Heart right ventricle (tissue), 16 donors: ENCODE measurements at regions of chr15 and their contacts with region 1.

Region 1: DNA sequence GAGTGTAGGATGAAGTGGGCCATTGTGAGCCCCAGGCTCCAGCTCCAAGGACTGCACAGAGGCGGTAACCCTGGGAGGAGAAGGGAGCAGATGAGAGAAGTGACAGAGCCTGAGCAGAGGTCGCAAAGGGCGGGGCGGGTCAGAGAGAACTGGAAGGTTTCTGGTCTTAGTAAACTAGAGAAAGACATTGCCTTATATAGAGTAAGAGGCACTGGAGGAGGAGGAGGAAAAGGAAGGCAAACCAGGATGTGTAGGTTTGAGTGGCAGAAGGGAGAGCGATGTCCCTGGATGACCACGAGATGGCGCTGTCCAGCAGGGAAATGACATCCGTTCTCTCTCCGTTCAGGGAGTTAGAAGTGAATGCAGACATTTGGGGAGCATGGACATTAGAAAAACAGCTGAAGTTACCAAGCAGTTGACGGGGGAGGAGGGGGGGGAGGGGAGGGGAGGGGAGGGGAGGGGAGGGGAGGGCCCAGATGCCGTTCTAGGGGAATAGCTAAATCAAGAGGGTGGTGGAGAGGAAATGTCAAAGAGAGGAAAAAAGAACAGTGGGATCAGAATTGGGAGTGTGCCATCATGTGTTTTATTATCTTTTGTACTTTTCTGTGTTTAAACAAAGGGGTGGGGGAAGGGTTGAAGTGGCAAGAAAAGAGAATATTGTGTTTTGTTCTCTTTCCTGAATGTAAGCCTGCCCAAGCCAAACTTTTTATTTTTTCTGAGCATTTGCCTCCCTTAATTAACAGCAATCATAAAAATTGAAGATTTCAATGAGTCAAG is 48.8 kb downstream of the STARD5 start:
- DNase-seq: peak; percentile 76 to 84
- ATAC-seq: peak; percentile 80 to 95 (median 88)
- H3K4me3 ChIP-seq: no peak overlapping the region
- H3K27ac ChIP-seq: peak overlapping the region in 8 of 10 donors; percentile 20 to 66 (median 40)
- H3K4me1 ChIP-seq: peaks cover 0 to 18% (median 5%) of the 10 kb centered on the region in 9 donors
- H3K27me3 ChIP-seq: no peaks in the 10 kb centered on the region
- CTCF ChIP-seq: peak; percentile 70 to 85 (median 79)

Region 2: GRCh38 chr15:80789296-80789695 is 485.8 kb before region 1 on chr15:
- intact Hi-C with region 1: no loop called
- DNase-seq: no peak
- ATAC-seq: no peak
- H3K4me3 ChIP-seq: no peak overlapping the region
- H3K27ac ChIP-seq: no peak overlapping the region
- H3K4me1 ChIP-seq: peaks cover 0 to 14% (median 0%) of the 10 kb centered on the region in 9 donors
- H3K27me3 ChIP-seq: peaks cover 0 to 18% (median 14%) of the 10 kb centered on the region in 7 donors
- CTCF ChIP-seq: no peak

Region 3: GRCh38 chr15:80989518-80990478 is 285.3 kb before region 1 on chr15 and contains the start of gene MESD:
- intact Hi-C with region 1: loop called in 1 of 10 experiments (anchors 5 kb)
- DNase-seq: peak; percentile 98 to 100
- ATAC-seq: peak; percentile 98 to 99 (median 99)
- H3K4me3 ChIP-seq: peak within 1 kb of the TSS; percentile 64 to 97 (median 80)
- H3K27ac ChIP-seq: peak within 1 kb of the TSS; percentile 84 to 94 (median 91)
- H3K4me1 ChIP-seq: peaks cover 3 to 70% (median 63%) of the 10 kb centered on the region in 9 donors
- H3K27me3 ChIP-seq: no peaks in the 10 kb centered on the region
- CTCF ChIP-seq: no peak
- total RNA-seq, gene MESD: 11.1 to 17.6 (median 15.2) TPM

Region 4: GRCh38 chr15:81323944-81324881 is 49.1 kb after region 1 on chr15 and contains the start of gene STARD5:
- intact Hi-C with region 1: loop called in 2 of 10 experiments (anchors 5 kb)
- DNase-seq: peak; percentile 99
- ATAC-seq: peak; percentile 100
- H3K4me3 ChIP-seq: peak within 1 kb of the TSS; percentile 45 to 87 (median 76)
- H3K27ac ChIP-seq: peak within 1 kb of the TSS in 9 of 10 donors; percentile 10 to 87 (median 64)
- H3K4me1 ChIP-seq: peaks cover 3 to 38% (median 14%) of the 10 kb centered on the region in 9 donors
- H3K27me3 ChIP-seq: no peaks in the 10 kb centered on the region
- CTCF ChIP-seq: no peak
- total RNA-seq, gene STARD5: 0.70 to 3.5 (median 1.2) TPM

Region 5: GRCh38 chr15:81336568-81336967 is 61.4 kb after region 1 on chr15:
- intact Hi-C with region 1: loop called in 4 of 10 experiments (anchors 5 to 10 kb)
- DNase-seq: no peak
- ATAC-seq: no peak
- H3K4me3 ChIP-seq: no peak overlapping the region
- H3K27ac ChIP-seq: no peak overlapping the region
- H3K4me1 ChIP-seq: peaks cover 0 to 28% (median 9%) of the 10 kb centered on the region in 9 donors
- H3K27me3 ChIP-seq: no peaks in the 10 kb centered on the region
- CTCF ChIP-seq: peak in 7 of 9 donors; percentile 6 to 41 (median 31)

Region 6: DNA sequence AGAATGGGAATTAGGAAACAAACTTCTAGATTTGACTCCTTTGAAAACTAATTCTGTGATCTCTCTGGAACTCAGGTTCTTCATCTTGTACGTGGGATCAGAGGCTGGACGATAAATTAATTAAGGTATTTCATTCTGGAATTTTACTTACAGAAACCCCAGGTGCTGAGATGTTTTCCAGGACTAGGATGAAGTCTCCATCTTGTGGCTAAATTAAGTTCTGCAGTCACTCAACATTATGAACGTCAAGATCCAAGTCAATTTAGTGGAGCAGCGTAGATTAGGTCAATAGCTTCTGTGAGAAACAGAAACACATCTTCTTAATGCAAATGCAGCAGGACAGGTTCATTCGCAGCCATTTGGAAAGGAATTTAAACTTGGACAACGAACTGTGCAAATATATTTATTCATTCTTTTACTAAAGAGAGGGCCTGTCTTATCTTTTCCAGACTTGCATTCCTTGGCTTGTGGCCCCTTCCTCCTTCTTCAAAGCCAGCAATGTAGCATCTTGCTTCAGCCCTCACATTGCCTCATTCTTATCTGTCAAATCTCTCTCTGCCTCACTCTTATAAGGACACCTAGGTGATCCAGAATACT is 125.6 kb after region 1 on chr15:
- intact Hi-C with region 1: loop called (anchors 1 to 5 kb)
- DNase-seq: no peak
- ATAC-seq: peak in 2 of 8 donors; percentile 38 to 44
- H3K4me3 ChIP-seq: no peak overlapping the region
- H3K27ac ChIP-seq: no peak overlapping the region
- H3K4me1 ChIP-seq: no peaks in the 10 kb centered on the region
- H3K27me3 ChIP-seq: peaks cover 0 to 6% (median 0%) of the 10 kb centered on the region in 7 donors
- CTCF ChIP-seq: peak; percentile 58 to 85 (median 80)

Region 7: GRCh38 chr15:81825136-81825535 is 550.0 kb after region 1 on chr15:
- intact Hi-C with region 1: no loop called
- DNase-seq: no peak
- ATAC-seq: no peak
- H3K4me3 ChIP-seq: no peak overlapping the region
- H3K27ac ChIP-seq: no peak overlapping the region
- H3K4me1 ChIP-seq: no peaks in the 10 kb centered on the region
- H3K27me3 ChIP-seq: no peaks in the 10 kb centered on the region
- CTCF ChIP-seq: no peak